Activated T-helper 1 cell treated with anti-CD3 and anti-CD28 coated beads, Interleukin-12 subunit alpha, Interleukin-12 subunit beta, Interleukin-2, Interleukin-4 antibody, amounts not matched to agents 30 ng/mL and 10 ng/mL and 1 ng/mL, durations not matched to agents 14 hours and 24 hours and 36 hours (primary cell): ENCODE measurements at regions of chr4 and their contacts with region 1.

Region 1: GRCh38 chr4:56435306-56435926 is at the start of gene PPAT:
- DNase-seq: peak; percentile 98
- H3K4me3 Mint-ChIP-seq: peak within 1 kb of the TSS; percentile 94
- H3K27ac Mint-ChIP-seq: peak within 1 kb of the TSS; percentile 99
- H3K4me1 Mint-ChIP-seq: peaks cover 52% of the 10 kb centered on the region
- H3K27me3 Mint-ChIP-seq: peaks cover 3% of the 10 kb centered on the region
- total RNA-seq, gene PPAT: 57.4 and 60.1 TPM in 2 replicates

Region 2: DNA sequence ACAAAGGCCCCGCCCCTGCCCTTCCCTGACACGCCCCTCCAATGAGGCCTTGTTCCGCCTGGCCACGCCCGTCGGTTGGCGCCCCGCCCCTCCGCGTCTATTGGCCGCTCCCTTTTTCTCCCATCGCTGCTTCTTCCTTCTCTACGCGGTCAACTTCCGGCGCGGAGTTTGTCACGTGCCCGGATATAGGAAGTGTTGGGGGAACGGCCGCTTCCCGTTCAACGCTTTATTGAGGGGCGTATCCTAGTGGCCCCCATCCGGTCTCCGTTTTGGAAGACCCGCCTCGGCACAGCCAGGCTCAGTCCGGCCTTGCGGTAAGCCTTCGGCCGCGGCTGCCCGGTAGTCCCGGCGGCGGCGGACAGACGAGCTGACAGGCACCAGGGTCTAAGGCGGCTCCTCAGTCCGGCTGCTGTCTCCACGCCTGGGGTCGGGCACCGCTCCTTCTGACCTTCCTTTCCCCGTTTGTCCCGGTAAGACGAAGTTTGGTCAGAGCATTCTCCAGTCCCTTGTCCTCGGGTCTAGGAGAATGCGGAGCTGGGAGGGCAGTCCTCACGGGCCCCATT is 581.9 kb before region 1 on chr4 and contains the start of gene EXOC1:
- intact Hi-C with region 1: loop called (anchors 2 kb)
- DNase-seq: peak; percentile 93
- H3K4me3 Mint-ChIP-seq: peak within 1 kb of the TSS; percentile 37
- H3K27ac Mint-ChIP-seq: peak within 1 kb of the TSS; percentile 53
- H3K4me1 Mint-ChIP-seq: peaks cover 27% of the 10 kb centered on the region
- H3K27me3 Mint-ChIP-seq: peaks cover 2% of the 10 kb centered on the region
- total RNA-seq, gene EXOC1: 18.3 and 18.8 TPM in 2 replicates

Region 3: DNA sequence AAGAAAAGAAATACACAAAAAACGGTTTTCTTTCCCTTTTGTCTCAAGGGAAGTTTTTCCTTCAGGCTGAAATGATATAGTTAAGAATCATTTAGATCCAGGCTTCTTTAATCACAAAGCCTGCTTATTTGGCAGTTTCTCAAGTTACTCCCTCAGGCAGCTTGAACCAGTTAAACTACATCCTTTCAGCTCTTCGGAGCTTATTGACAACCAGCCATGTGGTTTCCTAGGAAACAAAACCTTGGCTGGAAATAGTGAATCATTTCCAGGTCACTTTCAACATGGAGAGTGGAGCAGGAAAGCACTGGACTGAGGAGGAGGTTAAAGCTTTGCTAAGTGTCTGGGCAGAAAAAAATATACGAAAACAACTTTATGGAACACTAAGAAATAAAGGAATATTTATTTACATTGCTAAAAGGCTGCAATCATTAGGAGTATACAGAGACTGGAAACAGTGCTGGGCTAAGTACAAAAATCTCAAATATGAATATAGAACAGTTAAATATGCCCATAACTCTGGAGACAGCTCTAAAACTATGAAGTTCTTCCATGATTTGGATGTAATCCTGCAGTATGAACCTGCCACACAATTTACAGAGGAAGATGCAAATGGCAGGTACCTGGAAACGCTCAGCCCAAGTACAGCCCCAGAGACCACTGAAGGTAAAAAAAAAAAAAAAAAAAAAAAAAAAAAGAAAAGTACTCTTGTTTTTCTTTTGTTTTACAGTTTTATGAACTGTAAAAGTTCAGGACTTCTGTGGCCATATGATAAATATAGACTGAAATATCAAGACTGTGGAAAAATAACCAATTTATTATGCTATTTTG is 25.0 kb before region 1 on chr4:
- intact Hi-C with region 1: loop called (anchors 1 kb)
- DNase-seq: no peak
- H3K4me3 Mint-ChIP-seq: no peak overlapping the region
- H3K27ac Mint-ChIP-seq: peak overlapping the region; percentile 63
- H3K4me1 Mint-ChIP-seq: peaks cover 23% of the 10 kb centered on the region
- H3K27me3 Mint-ChIP-seq: no peaks in the 10 kb centered on the region

Region 4: DNA sequence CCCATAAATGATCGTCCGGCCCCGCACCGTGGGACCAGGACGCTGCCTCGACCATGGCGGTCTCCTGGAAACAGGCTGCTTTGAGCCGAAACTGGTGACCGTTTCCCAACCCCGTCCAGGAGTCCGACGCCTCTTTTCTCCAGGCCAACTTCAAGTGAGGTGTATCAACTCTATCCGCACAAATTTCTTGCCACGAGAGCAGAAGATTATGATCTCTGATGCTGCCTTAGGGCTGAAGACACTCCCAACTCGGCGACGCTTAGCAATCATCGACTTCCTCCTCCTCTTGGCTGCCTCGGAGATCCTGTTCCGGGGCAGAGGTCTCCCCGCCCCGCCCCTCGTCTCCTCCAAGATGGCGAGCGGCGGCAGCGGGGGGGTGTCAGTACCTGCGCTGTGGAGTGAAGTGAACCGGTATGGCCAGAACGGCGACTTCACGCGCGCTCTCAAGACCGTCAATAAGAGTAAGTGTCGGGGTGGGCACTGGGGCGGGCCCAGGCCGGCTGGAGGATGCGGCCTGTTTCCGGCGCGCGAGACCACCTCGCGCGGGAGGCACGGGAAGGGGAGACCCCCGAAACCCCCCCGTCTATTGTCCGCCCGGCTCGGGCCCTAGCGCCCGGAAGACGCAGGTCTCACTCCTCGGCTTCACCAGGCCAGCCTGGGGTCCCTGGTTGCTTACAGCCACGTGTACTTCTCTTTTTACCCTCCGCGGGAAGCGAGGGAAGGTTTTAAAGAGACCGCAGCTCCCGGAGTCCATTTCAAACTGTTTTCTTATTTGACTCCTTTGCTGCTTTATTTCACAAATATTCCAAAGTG is 32.1 kb after region 1 on chr4 and contains the start of gene SRP72:
- intact Hi-C with region 1: loop called (anchors 1 kb)
- DNase-seq: peak; percentile 88
- H3K4me3 Mint-ChIP-seq: peak within 1 kb of the TSS; percentile 98
- H3K27ac Mint-ChIP-seq: peak within 1 kb of the TSS; percentile 99
- H3K4me1 Mint-ChIP-seq: peaks cover 60% of the 10 kb centered on the region
- H3K27me3 Mint-ChIP-seq: no peaks in the 10 kb centered on the region
- total RNA-seq, gene SRP72: 199 and 211 TPM in 2 replicates

Region 5: DNA sequence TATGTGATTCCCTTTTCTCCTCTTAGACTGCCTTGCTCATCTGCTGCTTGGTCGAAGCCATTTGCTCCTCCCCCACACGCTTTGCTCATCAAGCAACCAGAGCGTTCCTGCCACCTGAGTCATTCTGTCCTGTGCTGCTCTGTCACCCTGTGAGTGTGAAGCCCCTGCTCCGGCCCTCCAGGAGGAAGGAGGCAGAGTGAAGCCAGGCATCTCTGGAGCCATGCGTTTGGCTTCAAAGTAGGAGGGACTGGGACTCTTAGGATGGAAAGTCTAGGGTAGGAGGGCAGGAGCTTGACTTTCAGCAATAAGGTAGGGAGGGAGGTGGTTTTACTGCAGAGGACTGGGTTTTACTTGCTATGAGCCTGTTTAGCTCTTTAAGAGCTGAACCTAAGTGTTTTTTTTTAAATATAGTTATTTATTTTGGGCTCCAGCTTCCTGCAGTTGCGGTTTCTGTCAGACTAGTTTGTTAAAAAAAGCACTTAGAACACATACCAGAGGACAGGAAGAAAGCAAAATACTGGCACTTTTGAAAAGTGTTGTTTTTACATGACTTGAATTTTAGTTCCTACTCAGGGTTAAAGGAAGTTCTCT is 322.5 kb after region 1 on chr4:
- intact Hi-C with region 1: loop called (anchors 1 kb)
- DNase-seq: peak; percentile 70
- H3K4me3 Mint-ChIP-seq: peak overlapping the region; percentile 74
- H3K27ac Mint-ChIP-seq: peak overlapping the region; percentile 98
- H3K4me1 Mint-ChIP-seq: peaks cover 48% of the 10 kb centered on the region
- H3K27me3 Mint-ChIP-seq: peaks cover 2% of the 10 kb centered on the region

Region 6: DNA sequence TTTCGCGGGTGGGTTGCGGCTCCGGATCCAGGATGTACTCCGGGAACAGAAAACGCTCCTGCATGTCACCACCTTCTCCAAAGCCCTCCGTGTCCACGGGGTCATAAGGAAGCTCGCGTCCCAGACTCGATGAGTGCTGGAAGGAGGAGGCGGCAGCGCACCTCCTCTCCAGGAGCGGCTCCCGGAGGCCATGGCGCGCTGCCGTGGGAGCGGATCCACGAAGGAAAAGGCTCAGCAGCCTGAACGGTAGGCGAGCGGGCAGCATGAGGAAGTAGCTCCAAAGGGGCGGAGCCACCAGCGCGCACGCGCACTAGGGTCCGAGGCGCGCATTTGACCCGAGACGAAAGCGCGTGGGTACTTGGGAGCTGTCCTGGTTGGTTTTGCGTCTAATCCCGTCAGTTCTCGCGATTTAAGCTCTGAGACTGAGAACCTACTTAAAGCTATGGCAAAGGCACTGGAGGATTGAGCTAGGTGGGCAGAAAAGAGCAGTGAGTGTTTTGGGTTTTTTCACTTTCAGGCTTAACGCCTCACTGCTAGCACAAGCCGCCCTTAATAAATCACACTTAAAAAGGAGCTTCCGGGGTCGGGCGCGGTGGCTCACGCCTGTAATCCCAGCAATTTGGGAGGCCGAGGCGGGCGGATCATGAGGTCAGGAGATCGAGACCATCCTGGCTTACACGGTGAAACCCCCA is 542.1 kb after region 1 on chr4 and contains the start of gene NOA1:
- intact Hi-C with region 1: loop called (anchors 1 kb)
- DNase-seq: peak; percentile 98
- H3K4me3 Mint-ChIP-seq: peak within 1 kb of the TSS; percentile 100
- H3K27ac Mint-ChIP-seq: peak within 1 kb of the TSS; percentile 100
- H3K4me1 Mint-ChIP-seq: peaks cover 51% of the 10 kb centered on the region
- H3K27me3 Mint-ChIP-seq: no peaks in the 10 kb centered on the region
- total RNA-seq, gene NOA1: 17.7 and 18.3 TPM in 2 replicates